Activated CD8-positive, alpha-beta T cell treated with anti-CD3 and anti-CD28 coated beads for 36 hours (primary cell): ENCODE measurements at regions of chr2 and their contacts with region 1.

Region 1: GRCh38 chr2:72887754-72888437 is 688 bp downstream of the SPR start:
- DNase-seq: peak; percentile 68
- ATAC-seq: peak; percentile 47
- H3K4me3 Mint-ChIP-seq: peak overlapping the region; percentile 72
- H3K27ac Mint-ChIP-seq: no peak overlapping the region
- H3K4me1 Mint-ChIP-seq: peaks cover 6% of the 10 kb centered on the region
- H3K27me3 Mint-ChIP-seq: peaks cover 50% of the 10 kb centered on the region
- CTCF ChIP-seq: peak; percentile 89

Region 2: DNA sequence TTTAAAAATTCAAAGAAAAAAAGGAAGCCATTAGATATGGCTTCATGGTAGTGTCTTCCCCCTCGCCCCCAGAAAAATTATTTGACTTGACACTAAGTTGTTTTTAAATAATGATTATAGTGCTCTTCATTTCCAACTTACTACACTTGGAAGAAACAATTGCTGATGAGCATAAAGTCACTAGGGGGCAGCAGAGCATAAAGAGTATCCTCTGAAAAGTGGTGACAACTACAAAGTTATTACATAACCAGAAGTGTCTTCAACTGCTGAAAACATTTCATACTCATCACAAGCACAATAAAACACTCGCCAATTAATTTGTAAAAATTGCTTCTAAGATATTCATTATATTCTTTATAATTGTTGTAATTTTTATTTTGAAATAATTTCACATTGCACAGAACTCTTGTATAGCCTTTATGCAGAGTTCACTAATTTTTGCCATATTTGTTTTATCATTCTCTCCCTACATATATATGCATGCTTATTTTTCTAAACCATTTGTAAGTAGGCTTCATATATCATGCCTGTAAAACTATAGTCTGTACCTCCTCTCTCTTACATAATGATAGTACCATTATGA is 116.9 kb before region 1 on chr2:
- CTCF ChIA-PET with region 1: interaction called, 14 read pairs
- POLR2A ChIA-PET with region 1: no interaction called
- intact Hi-C with region 1: no loop called
- DNase-seq: peak; percentile 73
- ATAC-seq: peak; percentile 55
- H3K4me3 Mint-ChIP-seq: no peak overlapping the region
- H3K27ac Mint-ChIP-seq: no peak overlapping the region
- H3K4me1 Mint-ChIP-seq: no peaks in the 10 kb centered on the region
- H3K27me3 Mint-ChIP-seq: no peaks in the 10 kb centered on the region
- CTCF ChIP-seq: peak; percentile 86

Region 3: DNA sequence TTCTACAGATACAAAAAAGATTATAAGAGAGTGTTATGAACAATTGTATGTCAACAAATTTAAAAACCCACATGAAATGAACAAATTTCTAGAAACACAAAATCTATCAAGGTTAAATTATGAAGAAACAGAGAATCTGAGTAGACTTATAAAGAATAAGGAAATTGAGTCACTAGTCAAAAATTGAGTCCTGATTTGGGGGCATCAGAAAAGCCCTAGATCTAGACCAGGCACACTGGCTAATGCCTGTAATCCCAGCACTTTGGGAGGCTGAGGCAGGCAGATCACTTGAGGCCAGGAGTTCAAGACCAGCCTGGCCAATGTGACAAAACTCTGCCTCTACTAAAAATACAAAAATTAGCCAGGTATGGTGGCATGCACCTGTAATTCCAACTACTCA is 16.0 kb before region 1 on chr2:
- CTCF ChIA-PET with region 1: interaction called, 24 read pairs
- POLR2A ChIA-PET with region 1: interaction called, 3 read pairs
- intact Hi-C with region 1: no loop called
- DNase-seq: no peak
- ATAC-seq: no peak
- H3K4me3 Mint-ChIP-seq: no peak overlapping the region
- H3K27ac Mint-ChIP-seq: no peak overlapping the region
- H3K4me1 Mint-ChIP-seq: no peaks in the 10 kb centered on the region
- H3K27me3 Mint-ChIP-seq: peaks cover 21% of the 10 kb centered on the region
- CTCF ChIP-seq: no peak

Region 4: GRCh38 chr2:72908741-72909140 is 20.8 kb after region 1 on chr2:
- CTCF ChIA-PET with region 1: interaction called, 21 read pairs
- POLR2A ChIA-PET with region 1: no interaction called
- intact Hi-C with region 1: no loop called
- DNase-seq: no peak
- ATAC-seq: no peak
- H3K4me3 Mint-ChIP-seq: no peak overlapping the region
- H3K27ac Mint-ChIP-seq: no peak overlapping the region
- H3K4me1 Mint-ChIP-seq: no peaks in the 10 kb centered on the region
- H3K27me3 Mint-ChIP-seq: peaks cover 55% of the 10 kb centered on the region
- CTCF ChIP-seq: no peak

Region 5: DNA sequence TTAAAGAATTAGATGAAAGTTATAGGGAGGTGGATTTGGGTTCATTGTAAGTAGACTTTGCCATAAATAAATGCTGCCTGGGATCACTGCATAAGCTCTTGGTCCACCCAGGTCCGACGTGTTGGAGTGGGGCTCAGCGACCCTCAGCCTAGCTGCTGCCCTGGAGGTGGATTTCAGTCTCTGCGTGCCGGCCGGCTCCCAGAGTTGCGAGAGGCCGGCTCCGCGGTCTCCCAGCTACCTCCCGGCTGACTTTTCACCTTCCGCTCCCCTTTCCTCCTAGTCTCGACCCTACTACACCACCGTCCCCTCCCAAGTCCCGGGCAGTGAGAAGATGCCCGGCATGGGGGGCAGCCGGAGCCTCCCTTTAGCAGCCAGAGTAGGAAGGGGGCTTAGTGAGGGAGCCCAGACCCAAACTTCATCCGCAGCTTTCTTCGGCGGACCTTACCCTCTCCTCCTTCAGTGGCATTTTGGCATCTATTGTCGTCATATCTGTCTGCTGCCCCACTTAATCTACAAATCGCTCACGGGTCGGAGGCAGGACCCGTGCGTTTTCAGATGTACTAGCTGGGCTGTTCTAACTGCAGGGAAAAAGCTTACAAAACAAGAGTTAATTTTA is 37.5 kb after region 1 on chr2:
- CTCF ChIA-PET with region 1: interaction called, 29 read pairs
- POLR2A ChIA-PET with region 1: no interaction called
- intact Hi-C with region 1: no loop called
- DNase-seq: no peak
- ATAC-seq: no peak
- H3K4me3 Mint-ChIP-seq: no peak overlapping the region
- H3K27ac Mint-ChIP-seq: no peak overlapping the region
- H3K4me1 Mint-ChIP-seq: peaks cover 7% of the 10 kb centered on the region
- H3K27me3 Mint-ChIP-seq: peaks cover 43% of the 10 kb centered on the region
- CTCF ChIP-seq: no peak

Region 6: DNA sequence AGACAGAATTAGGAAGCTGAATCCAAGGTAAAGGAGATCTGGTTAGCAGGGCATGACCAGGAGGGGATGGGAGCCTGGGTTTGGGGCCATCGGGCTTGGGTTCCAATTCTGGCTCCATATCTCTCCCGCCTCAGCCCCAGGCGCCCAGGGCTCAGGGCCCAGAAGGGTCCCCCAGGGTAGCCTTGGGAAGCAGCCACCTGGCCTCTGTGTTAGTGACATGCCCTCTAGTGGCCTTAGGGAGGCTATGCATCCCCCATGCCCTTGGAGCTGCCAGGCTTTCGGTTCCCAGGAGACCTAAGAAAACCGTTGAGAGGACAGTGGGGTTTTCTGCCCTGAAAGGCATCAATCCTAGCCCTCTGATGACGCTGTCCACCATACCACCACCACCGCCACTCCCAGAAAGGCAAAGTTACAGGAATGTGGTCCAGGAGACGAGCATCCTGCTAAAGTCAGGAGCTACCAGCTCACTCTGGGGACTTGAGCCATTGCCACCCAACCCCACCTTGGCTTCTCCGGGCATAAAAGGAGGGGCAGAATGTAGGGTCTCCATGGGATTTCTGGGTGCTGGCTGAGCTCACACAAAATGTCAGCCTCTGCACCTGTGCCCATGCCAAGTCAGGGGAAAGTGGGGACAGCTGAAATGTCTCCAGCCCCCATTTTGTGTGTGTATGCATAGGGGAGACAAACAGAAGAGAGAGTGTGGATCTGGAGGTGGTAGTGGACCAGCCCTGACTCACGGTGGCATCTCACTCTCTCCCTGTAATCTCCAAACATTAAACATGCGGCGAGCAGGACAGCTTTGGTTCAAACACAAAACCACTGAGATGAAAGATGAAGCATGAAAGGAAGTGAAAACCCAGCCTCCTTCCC is 85.9 kb after region 1 on chr2:
- CTCF ChIA-PET with region 1: interaction called, 96 read pairs
- POLR2A ChIA-PET with region 1: interaction called, 3 read pairs
- intact Hi-C with region 1: loop called (anchors 2 kb)
- DNase-seq: peak; percentile 58
- ATAC-seq: peak; percentile 96
- H3K4me3 Mint-ChIP-seq: no peak overlapping the region
- H3K27ac Mint-ChIP-seq: no peak overlapping the region
- H3K4me1 Mint-ChIP-seq: no peaks in the 10 kb centered on the region
- H3K27me3 Mint-ChIP-seq: no peaks in the 10 kb centered on the region
- CTCF ChIP-seq: peak; percentile 73

Region 7: GRCh38 chr2:73163483-73164367 is 275.8 kb after region 1 on chr2:
- CTCF ChIA-PET with region 1: interaction called, 8 read pairs
- POLR2A ChIA-PET with region 1: no interaction called
- intact Hi-C with region 1: loop called (anchors 5 kb)
- DNase-seq: peak; percentile 77
- ATAC-seq: peak; percentile 94
- H3K4me3 Mint-ChIP-seq: no peak overlapping the region
- H3K27ac Mint-ChIP-seq: no peak overlapping the region
- H3K4me1 Mint-ChIP-seq: no peaks in the 10 kb centered on the region
- H3K27me3 Mint-ChIP-seq: peaks cover 1% of the 10 kb centered on the region
- CTCF ChIP-seq: peak; percentile 82